Activated CD8-positive, alpha-beta memory T cell treated with anti-CD3 and anti-CD28 coated beads, Interleukin-2, amount 10 ng/mL, durations not matched to agents 7 days and 5 days (primary cell): ENCODE measurements at regions of chr2 and their contacts with region 1.

Region 1: GRCh38 chr2:113602869-113603466 is 24.1 kb upstream of the RABL2A start:
- DNase-seq: no peak
- ATAC-seq: peak; percentile 78
- H3K4me3 Mint-ChIP-seq: peak overlapping the region; percentile 84
- H3K27ac Mint-ChIP-seq: peak overlapping the region; percentile 92
- H3K4me1 Mint-ChIP-seq: peaks cover 6% of the 10 kb centered on the region
- H3K27me3 Mint-ChIP-seq: no peaks in the 10 kb centered on the region

Region 2: GRCh38 chr2:113240150-113240862 is 362.7 kb before region 1 on chr2:
- CTCF ChIA-PET with region 1: no interaction called
- DNase-seq: no peak
- ATAC-seq: no peak
- H3K4me3 Mint-ChIP-seq: no peak overlapping the region
- H3K27ac Mint-ChIP-seq: no peak overlapping the region
- H3K4me1 Mint-ChIP-seq: peaks cover 39% of the 10 kb centered on the region
- H3K27me3 Mint-ChIP-seq: no peaks in the 10 kb centered on the region

Region 3: DNA sequence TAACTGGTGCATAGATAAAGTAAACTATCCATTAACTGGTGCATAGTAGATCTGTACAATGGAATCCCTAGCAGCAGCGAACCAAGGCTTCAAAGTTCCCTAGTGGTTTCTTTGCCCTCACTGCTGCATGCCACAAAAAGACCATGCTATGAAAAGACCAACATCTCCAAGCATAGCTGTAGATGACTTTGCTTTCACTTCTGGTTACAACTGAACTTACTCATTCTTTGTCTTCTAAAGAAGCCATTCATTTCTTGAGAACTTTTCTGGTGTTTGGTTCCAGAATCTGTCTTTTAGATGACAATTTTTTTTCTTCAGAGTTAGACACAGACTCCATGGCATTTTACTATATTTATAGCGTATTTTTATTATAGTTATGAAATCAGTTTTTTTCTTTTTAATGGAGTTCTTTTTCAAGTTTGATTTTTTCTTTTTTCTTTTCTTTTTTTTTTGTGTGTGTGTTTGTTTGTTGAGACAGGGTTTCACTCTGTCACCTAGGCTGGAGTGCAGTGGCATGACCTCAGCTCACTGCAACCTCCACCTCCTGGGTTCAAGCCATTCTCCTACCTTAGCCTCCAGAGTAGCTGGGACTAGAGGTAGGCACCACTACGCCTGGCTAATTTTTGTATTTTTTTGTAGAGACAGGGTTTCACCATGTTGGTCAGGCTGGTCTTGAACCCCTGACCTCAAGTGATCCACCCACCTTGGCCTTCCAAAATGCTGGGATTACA is 89.9 kb after region 1 on chr2:
- CTCF ChIA-PET with region 1: interaction called, 43 read pairs
- DNase-seq: peak; percentile 78
- ATAC-seq: peak; percentile 84
- H3K4me3 Mint-ChIP-seq: peak overlapping the region; percentile 55
- H3K27ac Mint-ChIP-seq: peak overlapping the region; percentile 86
- H3K4me1 Mint-ChIP-seq: peaks cover 39% of the 10 kb centered on the region
- H3K27me3 Mint-ChIP-seq: peaks cover 2% of the 10 kb centered on the region

Region 4: DNA sequence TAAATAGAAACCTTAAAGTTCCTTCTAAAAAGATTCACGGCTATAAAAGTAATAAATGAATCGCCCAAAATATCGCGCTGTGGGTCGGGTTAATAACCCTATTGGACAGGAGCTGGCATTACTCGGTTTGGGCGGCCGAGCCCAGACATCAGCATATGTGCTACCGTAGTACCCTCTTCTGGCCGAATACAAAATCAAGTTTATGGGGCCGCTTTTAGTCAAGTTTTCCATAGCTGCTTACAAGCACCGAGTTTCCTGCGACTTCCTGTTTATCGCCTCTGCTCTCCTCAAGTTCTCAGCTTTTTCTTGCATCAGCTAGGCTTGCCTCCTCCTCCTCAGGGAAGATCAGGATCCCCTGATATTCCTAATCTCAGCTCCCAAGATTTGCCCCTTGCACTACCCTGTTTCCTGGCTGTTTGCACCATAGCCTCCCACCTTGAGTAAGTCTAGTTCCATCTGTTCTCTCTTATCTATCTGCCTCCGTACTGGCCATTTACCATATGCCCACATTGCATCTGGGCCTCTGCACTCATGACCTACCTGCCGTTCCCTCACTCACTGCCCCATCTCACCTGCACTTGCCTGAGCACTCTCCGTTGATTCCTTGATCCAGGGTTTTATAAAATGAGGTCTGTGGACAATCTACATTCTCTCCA is 97.3 kb after region 1 on chr2:
- CTCF ChIA-PET with region 1: interaction called, 43 read pairs
- DNase-seq: peak; percentile 84
- ATAC-seq: peak; percentile 96
- H3K4me3 Mint-ChIP-seq: peak overlapping the region; percentile 78
- H3K27ac Mint-ChIP-seq: peak overlapping the region; percentile 84
- H3K4me1 Mint-ChIP-seq: peaks cover 22% of the 10 kb centered on the region
- H3K27me3 Mint-ChIP-seq: no peaks in the 10 kb centered on the region